ENCODE measurements at regions of chr16 and their contacts with region 1.

Region 1: GRCh38 chr16:18789850-18790724 is at the start of gene RPS15A:
- DNase-seq: peak; percentile 90 to 98 (median 95)
- H3K4me3 ChIP-seq: peak within 1 kb of the TSS; percentile 77 to 98
- H3K4me3 Mint-ChIP-seq: peak within 1 kb of the TSS; percentile 91 to 98 (median 96)
- H3K27ac ChIP-seq: peak within 1 kb of the TSS; percentile 80
- H3K27ac Mint-ChIP-seq: peak within 1 kb of the TSS; percentile 93 to 97 (median 96)
- H3K4me1 ChIP-seq: peaks cover 43% of the 10 kb centered on the region
- H3K4me1 Mint-ChIP-seq: peaks cover 36 to 53% (median 46%) of the 10 kb centered on the region in 4 donors
- H3K27me3 ChIP-seq: no peaks in the 10 kb centered on the region
- H3K27me3 Mint-ChIP-seq: no peaks in the 10 kb centered on the region
- total RNA-seq, gene RPS15A: 3,088 to 3,151 TPM

Region 2: DNA sequence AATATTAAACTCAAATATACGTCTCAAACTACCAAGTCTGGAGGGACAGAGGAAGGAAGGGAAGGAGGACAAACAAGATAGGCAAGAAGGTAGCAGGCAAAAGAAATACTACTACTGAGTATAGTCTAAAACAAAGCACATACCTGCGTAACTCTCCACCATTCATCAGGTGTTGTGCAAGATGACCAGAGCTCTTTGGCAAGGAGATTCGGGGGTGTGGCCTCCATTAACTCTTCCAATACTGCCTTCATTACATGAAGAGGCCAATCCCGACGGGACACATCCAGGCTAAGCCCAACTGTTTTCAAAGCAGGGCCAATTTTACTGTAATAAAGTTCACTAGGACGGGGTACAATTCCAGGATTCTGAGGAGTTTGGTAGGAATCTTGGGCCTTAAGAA is 49.5 kb after region 1 on chr16:
- CTCF ChIA-PET with region 1: no interaction called
- POLR2A ChIA-PET with region 1: no interaction called
- intact Hi-C with region 1: no loop called
- DNase-seq: no peak
- H3K4me3 ChIP-seq: no peak overlapping the region
- H3K4me3 Mint-ChIP-seq: no peak overlapping the region
- H3K27ac ChIP-seq: no peak overlapping the region
- H3K27ac Mint-ChIP-seq: peak overlapping the region in 2 of 7 donors; percentile 47 to 73
- H3K4me1 ChIP-seq: no peaks in the 10 kb centered on the region
- H3K4me1 Mint-ChIP-seq: peaks cover 0 to 1% (median 0%) of the 10 kb centered on the region in 4 donors
- H3K27me3 ChIP-seq: no peaks in the 10 kb centered on the region
- H3K27me3 Mint-ChIP-seq: no peaks in the 10 kb centered on the region

Region 3: GRCh38 chr16:19067349-19068236 is 277.5 kb after region 1 on chr16 and contains the start of gene COQ7:
- CTCF ChIA-PET with region 1: no interaction called
- POLR2A ChIA-PET with region 1: interaction called, 6 read pairs
- intact Hi-C with region 1: loop called (anchors 1 kb)
- DNase-seq: peak; percentile 99 to 100 (median 100)
- H3K4me3 ChIP-seq: peak within 1 kb of the TSS; percentile 79 to 99
- H3K4me3 Mint-ChIP-seq: peak within 1 kb of the TSS; percentile 92 to 96 (median 94)
- H3K27ac ChIP-seq: peak within 1 kb of the TSS; percentile 100
- H3K27ac Mint-ChIP-seq: peak within 1 kb of the TSS; percentile 93 to 99 (median 99)
- H3K4me1 ChIP-seq: peaks cover 9% of the 10 kb centered on the region
- H3K4me1 Mint-ChIP-seq: peaks cover 3 to 24% (median 14%) of the 10 kb centered on the region in 4 donors
- H3K27me3 ChIP-seq: no peaks in the 10 kb centered on the region
- H3K27me3 Mint-ChIP-seq: peaks cover 0 to 6% of the 10 kb centered on the region in 2 donors
- total RNA-seq, gene COQ7: 16.2 to 19.2 TPM